ENCODE measurements at regions of chr7 and their contacts with region 1.

Region 1: GRCh38 chr7:26151953-26152781 is at the start of gene NFE2L3:
- DNase-seq: peak; percentile 90

Region 2: GRCh38 chr7:25940086-25940906 is 211.9 kb before region 1 on chr7:
- CTCF ChIA-PET with region 1: no interaction called
- POLR2A ChIA-PET with region 1: no interaction called
- DNase-seq: peak; percentile 41

Region 3: DNA sequence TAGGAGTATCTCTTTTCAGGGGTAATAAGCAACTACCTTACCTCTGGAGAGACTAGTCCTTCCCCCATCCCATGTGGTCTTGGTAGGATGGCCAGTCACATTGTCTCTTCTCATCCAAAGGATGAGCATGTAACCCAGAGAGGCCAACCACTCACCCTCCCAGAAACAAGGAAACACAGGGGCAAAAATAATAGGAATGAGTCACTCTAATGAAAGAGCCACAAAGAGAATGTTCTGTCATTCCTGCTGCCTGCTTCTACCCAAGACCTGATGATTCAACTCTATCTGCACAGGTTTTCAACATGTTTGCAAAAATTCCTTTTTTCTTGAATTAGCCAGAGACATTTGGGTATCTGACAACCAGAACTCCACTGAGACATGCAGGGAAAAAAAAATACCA is 99.4 kb before region 1 on chr7:
- CTCF ChIA-PET with region 1: no interaction called
- POLR2A ChIA-PET with region 1: no interaction called
- DNase-seq: no peak

Region 4: DNA sequence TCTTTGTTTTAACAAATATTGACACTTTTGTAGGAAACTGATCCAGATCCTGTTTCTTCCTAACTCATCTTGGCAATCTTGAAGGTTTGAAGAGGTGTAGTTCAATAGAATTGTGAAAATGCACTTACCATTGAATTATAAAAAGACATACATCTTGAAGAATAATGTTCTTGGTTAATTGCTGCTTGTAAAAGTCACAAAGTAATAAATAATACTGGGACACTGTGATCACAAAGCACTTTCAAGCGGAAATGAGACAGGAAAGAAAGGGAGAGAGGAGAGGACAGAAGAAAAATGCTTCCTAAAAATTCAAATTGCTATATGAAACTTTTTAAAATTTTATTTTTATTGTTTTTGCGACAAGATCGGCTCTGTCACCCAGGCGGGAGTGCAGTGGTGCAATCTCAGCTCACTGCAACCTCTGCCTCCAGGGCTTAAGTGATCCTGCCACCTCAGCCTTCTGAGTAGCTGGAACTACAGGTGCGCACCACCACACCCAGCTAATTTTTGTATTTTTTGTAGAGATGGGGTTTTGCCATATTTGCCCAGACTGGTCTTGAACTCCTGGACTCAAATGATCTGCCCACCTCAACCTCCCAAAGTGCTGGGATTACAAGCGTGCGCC is 15.2 kb before region 1 on chr7:
- CTCF ChIA-PET with region 1: no interaction called
- POLR2A ChIA-PET with region 1: interaction called, 13 read pairs
- DNase-seq: no peak

Region 5: GRCh38 chr7:26250239-26250638 is 98.1 kb after region 1 on chr7:
- CTCF ChIA-PET with region 1: no interaction called
- POLR2A ChIA-PET with region 1: no interaction called
- DNase-seq: no peak